SK-N-SH (cell line): ENCODE measurements at regions of chr16 and their contacts with region 1.

Region 1: DNA sequence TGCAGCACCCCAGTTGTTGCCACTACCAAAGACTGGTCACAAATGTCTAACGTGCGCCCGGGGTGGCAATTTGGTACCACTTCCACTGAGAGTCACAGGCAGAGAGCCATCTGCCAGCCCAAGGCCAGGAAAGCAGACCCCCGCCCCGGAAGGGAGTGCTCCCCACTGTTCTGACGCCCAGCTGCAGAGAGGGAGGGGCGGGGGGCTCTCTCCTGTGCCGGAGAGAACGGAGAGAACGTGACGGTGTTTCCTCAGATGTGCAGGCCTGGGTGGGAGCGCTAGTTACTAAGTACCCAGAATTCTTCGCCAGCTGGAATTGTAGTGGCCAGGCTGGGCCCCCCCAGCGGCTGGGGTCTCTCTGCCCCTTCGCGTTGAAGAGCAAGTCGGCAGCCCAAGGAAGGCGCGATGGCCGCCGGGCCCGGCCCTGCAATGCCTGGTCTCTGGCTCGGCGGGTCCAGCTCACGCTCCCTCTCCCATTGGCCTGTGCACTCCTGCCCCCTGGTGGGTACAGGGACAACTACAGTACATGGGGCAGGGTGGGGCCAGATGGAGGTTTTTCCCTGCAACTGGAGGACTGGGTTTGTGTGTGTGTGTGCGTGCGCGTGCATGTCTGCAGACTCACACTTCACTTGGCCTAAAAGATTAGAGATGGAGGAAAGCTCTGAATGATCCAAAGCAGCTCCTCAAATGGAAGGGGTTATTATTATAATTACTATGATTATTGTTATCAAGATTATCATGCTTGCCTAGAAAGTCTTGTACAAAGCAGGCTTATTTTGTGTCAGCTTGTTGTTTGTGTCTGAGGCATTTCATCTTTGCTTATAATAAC is 107.1 kb downstream of the AMFR start:
- DNase-seq: peak; percentile 97
- H3K4me3 ChIP-seq: no peak overlapping the region; a peak in 1 of 4 replicates
- H3K27ac ChIP-seq: peak overlapping the region in 1 of 2 experiments; percentile 16; a peak in 1 of 4 replicates
- H3K4me1 ChIP-seq: peaks cover 0 to 25% of the 10 kb centered on the region in 2 experiments; a peak in 1 of 4 replicates
- H3K27me3 ChIP-seq: no peaks in the 10 kb centered on the region; the same call in 1 of the 2 replicates
- CTCF ChIP-seq: peak; percentile 84
- EP300 ChIP-seq: no peak
- RAD21 ChIP-seq: peak; percentile 96

Region 2: DNA sequence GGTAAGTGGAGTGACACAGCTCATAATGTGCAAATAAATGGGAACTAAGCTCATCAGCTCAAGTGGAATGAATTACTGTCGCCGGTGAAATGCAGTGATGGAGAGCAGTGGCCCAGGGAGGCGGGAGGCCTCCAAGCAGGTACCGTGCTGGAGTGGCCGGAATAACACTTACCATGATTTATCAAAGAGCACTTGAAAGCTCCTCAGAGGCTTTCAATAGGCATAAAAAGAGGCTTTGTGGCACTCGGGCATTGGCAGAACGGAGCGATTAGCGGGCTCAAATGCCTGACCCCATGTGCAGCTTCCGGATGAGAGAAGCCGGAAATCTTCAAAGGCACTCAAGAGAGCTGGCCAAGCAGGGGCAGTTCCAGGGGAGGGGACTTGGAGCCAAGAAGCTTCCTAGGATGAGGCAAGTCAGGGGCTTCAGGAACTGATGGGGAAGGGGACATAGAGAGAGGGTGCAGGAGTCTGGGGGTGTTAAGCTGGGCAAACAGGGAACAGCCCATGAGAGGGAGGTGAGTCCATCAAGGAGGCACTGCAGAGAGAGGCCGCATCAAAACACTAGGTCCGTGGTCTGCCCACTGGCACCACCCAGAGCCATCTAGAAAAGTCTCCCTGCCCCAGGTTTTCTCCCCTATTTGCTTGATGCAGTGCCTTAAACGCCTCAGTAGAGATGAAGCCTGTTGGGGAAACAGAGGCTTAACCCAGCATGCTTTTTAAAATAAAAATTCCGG is 1138.2 kb before region 1 on chr16:
- CTCF ChIA-PET with region 1: no interaction called
- POLR2A ChIA-PET with region 1: no interaction called
- DNase-seq: no peak
- H3K4me3 ChIP-seq: no peak overlapping the region
- H3K27ac ChIP-seq: no peak overlapping the region
- H3K4me1 ChIP-seq: peaks cover 0 to 12% of the 10 kb centered on the region in 2 experiments; a peak in 2 of 4 replicates
- H3K27me3 ChIP-seq: no peaks in the 10 kb centered on the region
- CTCF ChIP-seq: no peak
- EP300 ChIP-seq: no peak
- RAD21 ChIP-seq: no peak

Region 3: DNA sequence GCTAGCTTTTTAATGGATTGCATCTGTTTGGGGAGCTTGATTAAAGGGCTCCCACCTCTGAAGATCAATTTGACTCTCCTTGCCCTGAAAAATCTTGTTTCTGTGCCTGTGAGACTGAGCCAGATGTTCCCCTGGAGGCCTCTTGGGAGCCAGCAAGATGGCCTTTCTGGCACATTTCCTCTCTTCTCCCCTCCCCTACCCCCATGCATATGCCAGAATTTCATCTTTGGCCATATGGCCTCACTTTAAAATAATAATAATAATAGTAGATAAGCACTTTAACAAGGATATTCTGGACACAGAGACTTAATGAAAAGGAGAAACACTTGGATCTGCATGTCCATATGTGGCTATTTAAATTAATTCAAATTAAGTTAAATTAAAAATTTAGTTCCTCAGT is 298.9 kb before region 1 on chr16:
- CTCF ChIA-PET with region 1: interaction called, 10 read pairs
- POLR2A ChIA-PET with region 1: no interaction called
- DNase-seq: peak; percentile 54
- H3K4me3 ChIP-seq: no peak overlapping the region
- H3K27ac ChIP-seq: peak overlapping the region in 1 of 2 experiments; percentile 77; a peak in 2 of 4 replicates
- H3K4me1 ChIP-seq: peaks cover 0 to 18% of the 10 kb centered on the region in 2 experiments; a peak in 1 of 4 replicates
- H3K27me3 ChIP-seq: no peaks in the 10 kb centered on the region
- CTCF ChIP-seq: no peak
- EP300 ChIP-seq: peak in 1 of 2 experiments; percentile 68; a peak in 1 of 4 replicates
- RAD21 ChIP-seq: 0 out of 2 replicates have a peak, but pooled peaks have one; percentile 3

Region 4: DNA sequence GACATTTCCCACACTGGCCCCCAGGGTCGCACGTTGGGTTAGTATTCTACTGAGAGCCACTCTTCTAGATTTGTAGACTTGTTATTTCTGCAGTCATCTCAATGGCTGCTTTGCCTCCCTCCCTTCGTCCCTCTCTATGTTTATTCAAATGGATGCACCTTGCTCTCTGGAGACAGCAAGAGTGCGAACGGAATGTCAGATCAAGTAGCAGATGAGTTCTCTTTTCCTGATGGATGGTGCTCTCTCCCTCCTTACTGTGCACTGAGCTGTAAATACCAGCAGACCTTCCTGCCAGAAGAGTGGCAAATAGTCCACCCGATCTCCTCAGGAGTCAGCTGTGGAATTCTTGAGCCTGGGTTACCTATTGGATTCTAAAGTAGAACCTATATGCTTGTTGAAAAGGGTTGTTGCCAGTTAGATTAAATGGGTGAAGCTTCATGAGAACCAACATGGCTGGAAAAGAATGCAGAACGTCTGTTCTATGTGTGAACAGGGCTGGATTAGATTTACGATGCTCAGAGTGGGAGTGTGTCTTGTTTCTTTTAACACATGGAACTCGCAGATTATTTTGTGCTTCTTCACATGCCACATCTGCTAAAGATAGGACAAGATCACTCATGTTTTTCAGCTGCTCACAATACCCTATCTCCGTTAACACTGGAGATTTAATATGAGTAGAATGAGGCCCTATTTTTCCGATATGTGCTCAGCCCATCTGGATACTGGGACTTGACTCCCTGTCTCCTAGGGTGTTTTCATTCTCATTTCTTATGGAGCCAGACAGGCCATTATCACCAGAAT is 120.8 kb before region 1 on chr16:
- CTCF ChIA-PET with region 1: interaction called, 26 read pairs
- POLR2A ChIA-PET with region 1: no interaction called
- DNase-seq: no peak
- H3K4me3 ChIP-seq: no peak overlapping the region
- H3K27ac ChIP-seq: no peak overlapping the region; a peak in 1 of 4 replicates
- H3K4me1 ChIP-seq: peaks cover 0 to 14% of the 10 kb centered on the region in 2 experiments; a peak in 2 of 4 replicates
- H3K27me3 ChIP-seq: peaks cover 25% of the 10 kb centered on the region; the same call in 1 of the 2 replicates
- CTCF ChIP-seq: no peak
- EP300 ChIP-seq: no peak
- RAD21 ChIP-seq: no peak

Region 5: GRCh38 chr16:56269811-56270684 is 48.2 kb before region 1 on chr16:
- CTCF ChIA-PET with region 1: interaction called, 16 read pairs
- POLR2A ChIA-PET with region 1: no interaction called
- DNase-seq: no peak
- H3K4me3 ChIP-seq: no peak overlapping the region
- H3K27ac ChIP-seq: peak overlapping the region in 1 of 2 experiments; percentile 51; a peak in 1 of 4 replicates
- H3K4me1 ChIP-seq: peaks cover 0 to 42% of the 10 kb centered on the region in 2 experiments; a peak in 1 of 4 replicates
- H3K27me3 ChIP-seq: no peaks in the 10 kb centered on the region
- CTCF ChIP-seq: no peak
- EP300 ChIP-seq: no peak
- RAD21 ChIP-seq: peak; percentile 12; the same call in 1 of the 2 replicates

Region 6: GRCh38 chr16:56300891-56301850 is 17.0 kb before region 1 on chr16:
- CTCF ChIA-PET with region 1: interaction called, 26 read pairs
- POLR2A ChIA-PET with region 1: no interaction called
- DNase-seq: no peak
- H3K4me3 ChIP-seq: no peak overlapping the region
- H3K27ac ChIP-seq: no peak overlapping the region; a peak in 1 of 4 replicates
- H3K4me1 ChIP-seq: peaks cover 0 to 58% of the 10 kb centered on the region in 2 experiments; a peak in 2 of 4 replicates
- H3K27me3 ChIP-seq: no peaks in the 10 kb centered on the region; the same call in 1 of the 2 replicates
- CTCF ChIP-seq: no peak
- EP300 ChIP-seq: no peak
- RAD21 ChIP-seq: no peak

Region 7: DNA sequence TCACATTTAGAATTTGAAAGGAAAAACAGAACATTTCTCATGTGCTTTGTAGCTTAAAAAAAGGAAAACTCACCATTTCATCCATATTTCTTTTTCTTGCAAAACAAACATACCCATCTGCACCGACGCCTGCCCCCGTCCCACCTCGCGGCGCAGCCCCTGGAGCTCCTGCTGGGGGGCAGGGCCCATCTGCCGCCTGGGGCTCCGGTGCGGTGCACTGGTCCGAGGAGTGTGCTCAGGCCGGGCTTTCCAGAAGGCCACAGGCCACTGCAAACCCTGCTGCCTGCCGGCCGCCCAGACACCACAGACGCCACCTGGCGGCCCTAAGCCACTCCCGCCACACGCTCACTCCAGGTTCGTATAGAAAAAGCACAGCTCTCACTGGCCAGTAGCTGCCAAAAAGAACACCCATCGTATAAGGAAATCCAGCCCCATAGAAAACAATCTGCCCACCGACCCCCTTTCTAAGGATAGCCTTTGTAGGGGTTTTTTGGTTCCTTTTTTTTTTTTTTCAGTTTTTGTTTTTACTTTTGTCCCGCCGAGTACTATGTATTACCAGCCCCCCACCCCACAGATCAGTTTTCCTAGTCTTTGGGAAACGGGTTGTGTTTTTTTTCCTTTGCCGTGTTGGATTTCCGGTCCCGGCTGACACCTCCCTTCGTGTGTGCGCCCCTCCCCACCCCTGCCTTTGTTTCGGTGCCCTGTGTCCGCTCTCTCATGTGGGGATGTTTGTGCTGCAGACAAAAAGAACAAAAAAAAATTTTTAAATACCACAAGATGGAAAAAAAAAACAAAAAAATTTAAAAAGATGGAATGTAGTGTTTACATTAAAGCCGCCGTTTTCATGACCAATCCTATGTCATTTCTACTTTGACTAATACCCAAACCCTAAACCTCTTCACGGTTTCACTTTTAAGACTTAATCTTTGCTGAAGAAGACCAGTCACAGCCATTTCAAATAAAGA is 38.3 kb after region 1 on chr16:
- CTCF ChIA-PET with region 1: interaction called, 21 read pairs
- POLR2A ChIA-PET with region 1: no interaction called
- DNase-seq: peak; percentile 93
- H3K4me3 ChIP-seq: peak overlapping the region in 1 of 2 experiments; percentile 35; a peak in 1 of 4 replicates
- H3K27ac ChIP-seq: peak overlapping the region; percentile 24 to 25; a peak in 2 of 4 replicates
- H3K4me1 ChIP-seq: peaks cover 0 to 8% of the 10 kb centered on the region in 2 experiments; a peak in 2 of 4 replicates
- H3K27me3 ChIP-seq: no peaks in the 10 kb centered on the region
- CTCF ChIP-seq: peak; percentile 78
- EP300 ChIP-seq: no peak
- RAD21 ChIP-seq: peak; percentile 73

Region 8: GRCh38 chr16:56373003-56373402 is 54.8 kb after region 1 on chr16:
- CTCF ChIA-PET with region 1: no interaction called
- POLR2A ChIA-PET with region 1: no interaction called
- DNase-seq: no peak
- H3K4me3 ChIP-seq: no peak overlapping the region
- H3K27ac ChIP-seq: no peak overlapping the region
- H3K4me1 ChIP-seq: peaks cover 9 to 10% of the 10 kb centered on the region in 2 experiments
- H3K27me3 ChIP-seq: no peaks in the 10 kb centered on the region
- CTCF ChIP-seq: no peak
- EP300 ChIP-seq: no peak
- RAD21 ChIP-seq: no peak

Region 9: DNA sequence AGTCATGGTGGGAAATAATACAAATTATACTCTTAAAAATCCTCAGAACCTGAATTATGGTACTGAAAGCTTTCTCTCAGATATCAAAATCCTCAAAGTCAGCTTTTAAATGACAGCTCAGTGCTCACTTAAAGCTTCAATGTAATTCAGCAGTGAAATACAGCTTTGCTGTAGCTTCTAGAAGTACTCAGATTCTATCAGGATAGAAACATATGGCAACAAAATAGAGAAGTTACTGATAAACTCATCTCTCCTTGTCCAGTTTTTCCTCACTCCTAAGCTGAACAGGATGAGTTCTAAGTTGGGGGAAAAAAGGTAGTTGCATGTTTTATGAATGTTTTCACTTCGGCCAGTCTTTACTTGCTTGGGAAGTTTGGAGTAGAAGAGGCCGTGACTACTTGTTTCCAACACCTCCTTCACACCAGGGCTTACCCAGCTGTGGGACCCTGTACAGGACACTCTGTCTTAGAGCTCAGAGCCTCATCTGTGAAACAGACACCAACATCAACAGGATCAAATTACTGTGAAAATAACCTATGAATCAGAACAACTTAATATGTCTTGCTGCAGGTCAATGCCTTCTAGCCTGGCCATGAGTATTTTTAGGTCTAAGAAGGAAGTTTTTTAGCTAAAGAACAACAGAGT is 163.4 kb after region 1 on chr16:
- CTCF ChIA-PET with region 1: no interaction called
- POLR2A ChIA-PET with region 1: no interaction called
- DNase-seq: no peak
- H3K4me3 ChIP-seq: no peak overlapping the region
- H3K27ac ChIP-seq: no peak overlapping the region
- H3K4me1 ChIP-seq: peaks cover 0 to 11% of the 10 kb centered on the region in 2 experiments; a peak in 1 of 4 replicates
- H3K27me3 ChIP-seq: no peaks in the 10 kb centered on the region
- CTCF ChIP-seq: no peak
- EP300 ChIP-seq: no peak
- RAD21 ChIP-seq: no peak

Region 10: DNA sequence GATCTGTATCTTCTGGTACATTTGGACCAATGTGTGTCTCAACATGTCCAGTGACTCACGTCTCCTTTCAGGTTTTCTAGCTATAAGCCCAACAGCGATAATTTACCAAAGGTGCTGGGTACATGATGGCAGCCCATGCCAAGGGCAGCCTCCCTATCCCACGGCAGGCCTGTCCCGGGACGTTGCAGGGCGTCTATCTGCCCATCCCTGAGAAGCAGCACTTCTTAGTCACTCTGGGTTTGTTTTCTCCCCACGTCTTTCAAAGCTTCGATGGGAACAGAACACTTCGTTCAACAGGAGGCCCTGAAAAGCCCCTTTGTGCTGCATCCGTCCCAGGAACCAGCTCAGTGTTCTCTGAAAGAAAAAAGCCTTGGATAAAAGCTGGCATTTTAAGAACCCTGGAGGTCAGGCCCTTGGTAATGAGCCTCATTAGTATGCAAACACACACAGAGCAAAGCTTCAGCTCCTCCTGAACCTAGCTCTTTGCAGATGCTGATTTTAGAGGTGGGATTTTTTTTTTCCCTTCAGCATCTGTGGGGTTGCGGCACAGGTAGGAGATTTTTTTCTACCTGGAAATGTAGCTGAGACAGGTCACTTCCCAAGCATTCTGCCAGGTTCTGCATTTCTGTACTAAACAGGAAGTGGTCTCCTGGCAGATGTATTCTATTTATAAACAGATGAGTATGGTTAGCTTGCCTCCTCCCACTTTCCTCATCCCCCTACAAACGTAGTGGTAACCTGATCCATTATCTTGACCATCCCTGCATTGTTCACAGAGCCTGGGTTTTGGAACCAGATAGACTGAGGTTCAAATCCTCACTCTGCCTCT is 229.1 kb after region 1 on chr16:
- CTCF ChIA-PET with region 1: no interaction called
- POLR2A ChIA-PET with region 1: no interaction called
- DNase-seq: peak; percentile 20
- H3K4me3 ChIP-seq: no peak overlapping the region
- H3K27ac ChIP-seq: 0 out of 4 replicates have a peak overlapping the region, but pooled peaks of 1 of the 2 experiments have one; percentile 5
- H3K4me1 ChIP-seq: peaks cover 0 to 12% of the 10 kb centered on the region in 2 experiments; a peak in 2 of 4 replicates
- H3K27me3 ChIP-seq: no peaks in the 10 kb centered on the region
- CTCF ChIP-seq: no peak
- EP300 ChIP-seq: no peak
- RAD21 ChIP-seq: no peak